ENCODE measurements at regions of chr6 and their contacts with region 1.

Region 1: DNA sequence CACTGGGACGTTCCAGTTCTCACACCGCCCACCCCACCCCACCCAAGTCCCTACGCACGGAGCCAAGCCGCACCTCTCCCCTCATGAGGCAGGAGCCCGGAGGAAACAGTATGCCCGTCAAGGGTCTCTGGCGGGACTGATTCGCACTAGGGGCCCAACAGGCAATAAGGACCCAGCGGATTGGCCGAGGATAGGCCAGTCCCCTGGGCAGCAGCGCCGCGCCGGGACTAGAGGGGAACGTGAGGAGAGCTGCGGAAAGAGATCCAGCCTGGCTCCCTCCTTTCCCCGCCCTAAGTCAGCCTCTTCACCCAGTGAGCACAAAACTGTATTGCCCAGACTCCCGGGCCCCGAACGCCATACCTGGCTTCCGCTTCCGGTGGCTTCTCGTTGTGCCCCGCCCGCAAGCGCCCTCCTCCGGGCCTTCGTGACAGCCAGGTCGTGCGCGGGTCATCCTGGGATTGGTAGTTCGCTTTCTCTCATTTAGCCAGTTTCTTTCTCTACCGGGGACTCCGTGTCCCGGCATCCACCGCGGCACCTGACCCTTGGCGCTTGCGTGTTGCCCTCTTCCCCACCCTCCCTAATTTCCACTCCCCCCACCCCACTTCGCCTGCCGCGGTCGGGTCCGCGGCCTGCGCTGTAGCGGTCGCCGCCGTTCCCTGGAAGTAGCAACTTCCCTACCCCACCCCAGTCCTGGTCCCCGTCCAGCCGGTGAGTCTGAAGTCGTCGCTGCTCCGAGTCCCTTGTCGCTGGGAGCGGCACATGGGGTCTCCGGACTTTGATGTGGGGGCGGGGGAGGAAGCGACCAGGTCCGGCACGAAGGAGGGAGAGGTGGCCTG is at the start of gene CSNK2B:
- DNase-seq: peak; percentile 98
- ATAC-seq: peak; percentile 87
- H3K4me3 ChIP-seq: peak within 1 kb of the TSS; percentile 58 to 98 (median 85)
- H3K4me3 Mint-ChIP-seq: peak within 1 kb of the TSS; percentile 96
- H3K27ac ChIP-seq: peak within 1 kb of the TSS; percentile 96 to 98
- H3K27ac Mint-ChIP-seq: peak within 1 kb of the TSS; percentile 100
- H3K4me1 ChIP-seq: peaks cover 27 to 47% of the 10 kb centered on the region in 2 donors
- H3K4me1 Mint-ChIP-seq: peaks cover 53% of the 10 kb centered on the region
- H3K27me3 ChIP-seq: no peaks in the 10 kb centered on the region
- H3K27me3 Mint-ChIP-seq: no peaks in the 10 kb centered on the region
- CTCF ChIP-seq: no peak
- total RNA-seq, gene CSNK2B: 141 and 146 TPM in 2 replicates

Region 2: DNA sequence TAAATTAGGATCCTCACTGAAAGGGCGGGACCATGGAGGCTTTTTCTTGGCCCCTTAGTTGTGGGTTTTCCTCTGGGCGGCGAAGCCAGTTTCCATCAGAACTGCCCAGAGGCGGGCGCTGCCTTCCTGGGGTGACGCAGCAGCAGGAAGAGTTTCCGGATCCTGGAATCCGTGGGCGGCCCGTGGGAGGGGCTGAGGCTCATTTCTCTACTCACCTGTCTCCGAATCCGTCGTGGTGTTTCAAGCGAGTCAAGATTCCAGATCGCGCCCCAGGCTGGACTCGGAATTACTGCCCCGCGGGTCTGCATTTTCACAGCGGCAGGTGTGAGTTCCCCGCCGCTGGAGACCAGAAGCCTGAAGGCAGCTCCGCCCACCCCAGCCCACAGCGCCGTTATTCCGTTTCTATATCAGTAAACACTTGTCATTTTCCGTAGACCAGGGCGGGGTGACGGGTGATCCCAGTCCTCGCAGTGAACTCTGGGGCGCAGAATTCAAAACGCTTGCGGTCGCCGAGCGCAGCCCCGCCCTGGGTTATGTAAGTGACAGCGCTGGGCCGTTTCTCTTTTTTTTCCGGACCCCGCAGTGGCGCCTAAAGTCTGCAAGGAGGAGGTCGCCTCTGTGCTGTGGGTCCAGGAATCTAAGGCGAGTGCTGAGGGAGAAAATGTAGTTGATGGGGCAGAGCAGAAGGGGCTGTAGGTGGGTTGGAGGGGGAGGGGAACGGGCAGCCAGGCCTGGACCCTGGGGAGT is 468.0 kb before region 1 on chr6:
- CTCF ChIA-PET with region 1: no interaction called
- POLR2A ChIA-PET with region 1: no interaction called
- intact Hi-C with region 1: loop called (anchors 5 kb)
- DNase-seq: peak; percentile 95
- ATAC-seq: peak; percentile 77
- H3K4me3 ChIP-seq: peak overlapping the region; percentile 70 to 99 (median 90)
- H3K4me3 Mint-ChIP-seq: peak overlapping the region; percentile 82
- H3K27ac ChIP-seq: peak overlapping the region; percentile 97 to 100
- H3K27ac Mint-ChIP-seq: peak overlapping the region; percentile 100
- H3K4me1 ChIP-seq: peaks cover 11 to 47% of the 10 kb centered on the region in 2 donors
- H3K4me1 Mint-ChIP-seq: peaks cover 50% of the 10 kb centered on the region
- H3K27me3 ChIP-seq: no peaks in the 10 kb centered on the region
- H3K27me3 Mint-ChIP-seq: no peaks in the 10 kb centered on the region
- CTCF ChIP-seq: no peak

Region 3: DNA sequence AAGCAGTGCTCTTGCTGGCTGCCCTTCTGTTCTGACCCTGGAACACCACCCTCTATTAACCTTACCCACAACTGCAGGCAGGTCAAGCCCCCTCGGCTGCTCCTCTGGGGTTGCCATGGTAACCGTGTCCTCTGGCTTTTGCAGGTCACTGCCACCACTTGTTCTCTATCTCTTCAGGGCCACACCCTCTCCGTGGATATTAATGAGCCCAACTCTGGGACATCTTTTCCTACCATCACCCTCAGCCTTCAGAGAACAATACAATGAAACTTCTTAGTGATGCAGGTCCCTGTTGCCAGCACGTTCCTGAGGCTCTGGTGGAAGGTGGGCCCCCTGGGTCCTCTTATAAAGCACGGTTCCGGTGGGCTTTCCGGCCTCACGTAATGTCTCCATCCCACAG is 198.6 kb before region 1 on chr6:
- CTCF ChIA-PET with region 1: no interaction called
- POLR2A ChIA-PET with region 1: no interaction called
- intact Hi-C with region 1: no loop called
- DNase-seq: no peak
- ATAC-seq: no peak
- H3K4me3 ChIP-seq: peak overlapping the region in 1 of 5 experiments; percentile 14
- H3K4me3 Mint-ChIP-seq: peak overlapping the region; percentile 99
- H3K27ac ChIP-seq: peak overlapping the region in 1 of 2 donors; percentile 37
- H3K27ac Mint-ChIP-seq: peak overlapping the region; percentile 12
- H3K4me1 ChIP-seq: peaks cover 80 to 83% of the 10 kb centered on the region in 2 donors
- H3K4me1 Mint-ChIP-seq: peaks cover 97% of the 10 kb centered on the region
- H3K27me3 ChIP-seq: no peaks in the 10 kb centered on the region
- H3K27me3 Mint-ChIP-seq: no peaks in the 10 kb centered on the region
- CTCF ChIP-seq: no peak

Region 4: GRCh38 chr6:31575335-31575901 is 90.3 kb before region 1 on chr6 and contains the start of gene TNF:
- CTCF ChIA-PET with region 1: no interaction called
- POLR2A ChIA-PET with region 1: no interaction called
- intact Hi-C with region 1: no loop called
- DNase-seq: peak; percentile 84
- ATAC-seq: peak; percentile 40
- H3K4me3 ChIP-seq: peak within 1 kb of the TSS; percentile 74 to 87 (median 77)
- H3K4me3 Mint-ChIP-seq: peak within 1 kb of the TSS; percentile 89
- H3K27ac ChIP-seq: peak within 1 kb of the TSS; percentile 77 to 89
- H3K27ac Mint-ChIP-seq: peak within 1 kb of the TSS; percentile 93
- H3K4me1 ChIP-seq: peaks cover 80 to 99% of the 10 kb centered on the region in 2 donors
- H3K4me1 Mint-ChIP-seq: peaks cover 94% of the 10 kb centered on the region
- H3K27me3 ChIP-seq: no peaks in the 10 kb centered on the region
- H3K27me3 Mint-ChIP-seq: no peaks in the 10 kb centered on the region
- CTCF ChIP-seq: no peak
- total RNA-seq, gene TNF: 22.2 and 22.6 TPM in 2 replicates

Region 5: DNA sequence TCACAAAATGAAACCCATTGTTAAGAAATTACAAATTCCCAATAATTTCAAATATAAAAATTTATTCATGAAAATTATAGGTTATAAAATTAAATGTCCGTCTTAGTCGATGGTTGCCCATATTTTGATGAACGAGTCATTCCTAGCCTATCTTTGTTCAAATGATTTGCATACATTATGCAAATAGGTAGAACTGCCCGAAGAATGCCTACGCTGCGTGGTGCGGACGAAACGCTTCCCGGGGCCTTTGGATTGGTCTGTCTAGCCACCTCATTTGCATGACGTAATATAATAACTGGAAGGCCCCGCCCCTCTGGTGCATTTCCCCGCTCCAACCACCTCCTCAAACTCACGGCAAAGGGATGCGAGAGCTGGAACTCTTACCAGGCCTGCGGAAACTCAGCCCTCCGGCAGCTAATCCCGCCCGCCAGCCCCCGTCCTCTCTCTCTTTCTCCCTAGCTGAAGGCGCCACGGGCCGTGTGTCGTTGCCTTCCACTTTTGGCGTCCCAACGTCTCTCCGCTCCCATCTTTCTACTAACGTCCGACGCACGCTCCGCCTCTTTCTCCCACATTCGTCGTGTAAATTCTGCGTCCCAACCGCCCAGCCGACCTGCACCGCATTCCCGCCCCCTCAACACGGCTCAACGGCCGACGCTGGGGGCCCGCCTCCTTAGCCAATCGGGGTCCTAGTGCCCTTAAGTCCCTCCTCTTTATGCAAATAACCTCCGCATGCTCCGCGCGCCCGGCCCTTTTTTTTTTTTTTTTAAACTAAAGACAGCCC is 45.7 kb before region 1 on chr6:
- CTCF ChIA-PET with region 1: no interaction called
- POLR2A ChIA-PET with region 1: interaction called, 5 read pairs
- intact Hi-C with region 1: loop called (anchors 1 kb)
- DNase-seq: peak; percentile 99
- ATAC-seq: peak; percentile 84
- H3K4me3 ChIP-seq: peak overlapping the region; percentile 8 to 90 (median 84)
- H3K4me3 Mint-ChIP-seq: peak overlapping the region; percentile 86
- H3K27ac ChIP-seq: peak overlapping the region; percentile 97 to 99
- H3K27ac Mint-ChIP-seq: peak overlapping the region; percentile 95
- H3K4me1 ChIP-seq: peaks cover 26 to 35% of the 10 kb centered on the region in 2 donors
- H3K4me1 Mint-ChIP-seq: peaks cover 45% of the 10 kb centered on the region
- H3K27me3 ChIP-seq: no peaks in the 10 kb centered on the region
- H3K27me3 Mint-ChIP-seq: no peaks in the 10 kb centered on the region
- CTCF ChIP-seq: no peak

Region 6: GRCh38 chr6:31739639-31740396 is 74.1 kb after region 1 on chr6 and contains the start of gene MSH5:
- CTCF ChIA-PET with region 1: interaction called, 3 read pairs
- POLR2A ChIA-PET with region 1: interaction called, 5 read pairs
- intact Hi-C with region 1: loop called (anchors 5 kb)
- DNase-seq: peak; percentile 96
- ATAC-seq: peak; percentile 82
- H3K4me3 ChIP-seq: peak within 1 kb of the TSS; percentile 71 to 90 (median 81)
- H3K4me3 Mint-ChIP-seq: peak within 1 kb of the TSS; percentile 100
- H3K27ac ChIP-seq: peak within 1 kb of the TSS; percentile 81 to 96
- H3K27ac Mint-ChIP-seq: peak within 1 kb of the TSS; percentile 91
- H3K4me1 ChIP-seq: peaks cover 39 to 42% of the 10 kb centered on the region in 2 donors
- H3K4me1 Mint-ChIP-seq: peaks cover 60% of the 10 kb centered on the region
- H3K27me3 ChIP-seq: no peaks in the 10 kb centered on the region
- H3K27me3 Mint-ChIP-seq: no peaks in the 10 kb centered on the region
- CTCF ChIP-seq: no peak
- total RNA-seq, gene MSH5: 49.9 and 50.1 TPM in 2 replicates

Region 7: GRCh38 chr6:31834434-31835198 is 168.9 kb after region 1 on chr6:
- CTCF ChIA-PET with region 1: interaction called, 10 read pairs
- POLR2A ChIA-PET with region 1: interaction called, 9 read pairs
- intact Hi-C with region 1: loop called (anchors 1 kb)
- DNase-seq: peak; percentile 91
- ATAC-seq: peak; percentile 61
- H3K4me3 ChIP-seq: peak overlapping the region; percentile 85 to 95 (median 90)
- H3K4me3 Mint-ChIP-seq: peak overlapping the region; percentile 87
- H3K27ac ChIP-seq: peak overlapping the region; percentile 97 to 98
- H3K27ac Mint-ChIP-seq: peak overlapping the region; percentile 92
- H3K4me1 ChIP-seq: peaks cover 44 to 75% of the 10 kb centered on the region in 2 donors
- H3K4me1 Mint-ChIP-seq: peaks cover 56% of the 10 kb centered on the region
- H3K27me3 ChIP-seq: no peaks in the 10 kb centered on the region
- H3K27me3 Mint-ChIP-seq: no peaks in the 10 kb centered on the region
- CTCF ChIP-seq: no peak

Region 8: DNA sequence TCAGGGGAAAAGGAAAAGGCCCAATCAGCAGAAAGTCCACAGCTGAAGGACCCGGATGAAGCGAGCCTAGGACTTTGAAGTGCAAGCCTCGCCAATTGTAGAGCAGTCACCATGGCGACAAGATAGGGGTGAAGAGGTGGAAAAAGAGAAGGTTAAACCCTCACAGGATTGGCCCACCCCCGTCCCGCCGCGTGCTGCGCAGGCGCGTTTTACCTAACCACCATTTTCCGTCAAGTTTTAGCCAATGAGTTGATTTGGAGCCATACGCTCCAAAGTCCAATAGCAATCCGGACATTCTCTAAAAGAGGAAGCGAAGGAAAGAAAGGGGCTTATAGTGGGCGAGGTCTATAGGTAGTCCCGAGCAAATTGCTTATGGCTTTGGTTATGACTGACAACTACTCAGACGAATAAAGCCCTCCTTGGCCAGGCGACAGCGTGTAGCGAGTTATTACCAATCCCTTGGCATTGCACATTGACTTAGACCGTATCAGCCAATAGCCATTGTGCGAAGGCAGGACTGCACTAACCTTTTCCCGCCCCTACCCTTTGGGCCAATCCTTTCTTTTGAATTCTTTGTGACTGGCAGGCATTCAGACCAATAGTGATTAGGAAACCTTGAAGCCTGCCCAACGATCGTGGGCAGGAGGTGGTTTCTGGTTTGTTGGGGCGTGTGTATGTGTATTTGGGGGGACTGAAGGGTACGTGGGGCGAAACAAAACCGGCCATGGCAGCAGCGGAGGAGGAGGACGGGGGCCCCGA is 512.2 kb after region 1 on chr6 and contains the start of gene RNF5:
- CTCF ChIA-PET with region 1: no interaction called
- POLR2A ChIA-PET with region 1: no interaction called
- intact Hi-C with region 1: loop called (anchors 5 kb)
- DNase-seq: peak; percentile 99
- ATAC-seq: peak; percentile 79
- H3K4me3 ChIP-seq: peak within 1 kb of the TSS; percentile 68 to 92 (median 75)
- H3K4me3 Mint-ChIP-seq: peak within 1 kb of the TSS; percentile 97
- H3K27ac ChIP-seq: peak within 1 kb of the TSS; percentile 97 to 98
- H3K27ac Mint-ChIP-seq: peak within 1 kb of the TSS; percentile 99
- H3K4me1 ChIP-seq: peaks cover 34 to 47% of the 10 kb centered on the region in 2 donors
- H3K4me1 Mint-ChIP-seq: peaks cover 68% of the 10 kb centered on the region
- H3K27me3 ChIP-seq: no peaks in the 10 kb centered on the region
- H3K27me3 Mint-ChIP-seq: no peaks in the 10 kb centered on the region
- CTCF ChIP-seq: no peak
- total RNA-seq, gene RNF5: 39.0 and 40.7 TPM in 2 replicates